ENCODE measurements at regions of chr14 and their contacts with region 1.

Region 1: GRCh38 chr14:90383075-90383730 is 13.6 kb upstream of the CALM1 start:
- DNase-seq: peak; percentile 99
- ATAC-seq: peak; percentile 88
- H3K4me3 Mint-ChIP-seq: no peak overlapping the region
- H3K27ac Mint-ChIP-seq: no peak overlapping the region
- H3K4me1 Mint-ChIP-seq: peaks cover 23% of the 10 kb centered on the region
- H3K27me3 Mint-ChIP-seq: no peaks in the 10 kb centered on the region

Region 2: DNA sequence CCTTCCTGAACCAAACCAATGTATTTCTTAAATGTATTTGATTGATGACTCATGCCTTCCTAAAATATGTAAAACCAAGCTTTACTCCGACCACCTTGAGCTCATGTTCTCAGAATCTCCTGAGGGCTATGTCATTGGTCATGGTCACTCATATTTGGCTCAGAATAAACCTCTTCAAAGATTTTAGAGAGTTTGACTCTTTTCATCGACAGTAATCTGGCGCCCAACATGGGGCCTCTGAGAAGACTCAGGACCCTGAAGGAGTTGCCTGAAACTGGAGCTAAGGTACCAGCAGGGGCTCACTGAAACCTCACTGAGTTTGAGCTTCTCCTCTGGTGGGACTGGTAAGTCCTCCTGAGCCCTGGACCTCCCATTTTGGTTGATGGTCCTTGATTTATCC is 144.1 kb before region 1 on chr14:
- CTCF ChIA-PET with region 1: no interaction called
- POLR2A ChIA-PET with region 1: no interaction called
- DNase-seq: no peak
- ATAC-seq: no peak
- H3K4me3 Mint-ChIP-seq: no peak overlapping the region
- H3K27ac Mint-ChIP-seq: no peak overlapping the region
- H3K4me1 Mint-ChIP-seq: peaks cover 3% of the 10 kb centered on the region
- H3K27me3 Mint-ChIP-seq: peaks cover 7% of the 10 kb centered on the region

Region 3: DNA sequence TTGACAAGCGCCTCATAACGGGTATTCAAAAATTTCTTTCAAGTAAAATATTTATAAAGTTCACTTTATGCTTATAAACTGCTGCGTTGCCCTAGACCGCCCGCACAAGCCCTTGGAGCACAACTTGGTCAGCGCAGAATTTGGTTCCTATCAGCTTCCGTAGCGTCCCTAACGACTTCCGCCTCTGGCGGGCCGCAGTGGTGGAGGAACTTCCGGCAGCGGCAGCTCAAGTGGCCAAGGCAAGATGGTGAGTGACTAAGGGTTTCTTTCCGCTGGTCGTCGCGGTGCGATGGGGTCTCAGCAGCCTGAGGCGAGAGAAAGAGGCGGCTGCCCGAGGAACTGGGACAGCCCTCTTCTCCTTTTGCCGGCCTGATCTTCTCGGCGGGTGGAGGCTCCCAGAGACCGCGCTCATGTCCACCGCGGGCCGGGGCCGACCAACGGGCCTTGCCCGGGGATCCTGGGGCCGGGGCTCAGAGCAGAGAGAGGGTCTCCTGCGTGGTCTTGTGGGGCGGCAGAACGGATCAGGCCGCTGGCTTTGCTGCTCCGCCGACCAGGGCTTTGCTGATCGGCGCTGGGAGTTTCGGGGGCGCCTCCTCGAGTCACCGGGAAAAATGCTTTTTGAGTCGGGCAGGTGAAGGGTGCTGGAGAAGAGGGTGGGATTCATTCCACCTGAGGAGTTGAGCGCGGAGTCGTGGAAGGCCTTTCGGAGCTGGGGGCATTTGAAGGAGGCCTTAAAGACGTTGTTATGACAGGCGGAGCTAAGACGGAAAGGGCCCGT is 126.7 kb before region 1 on chr14 and contains the start of gene PSMC1:
- CTCF ChIA-PET with region 1: no interaction called
- POLR2A ChIA-PET with region 1: interaction called, 20 read pairs
- DNase-seq: peak; percentile 92
- ATAC-seq: peak; percentile 97
- H3K4me3 Mint-ChIP-seq: peak within 1 kb of the TSS; percentile 93
- H3K27ac Mint-ChIP-seq: peak within 1 kb of the TSS; percentile 95
- H3K4me1 Mint-ChIP-seq: peaks cover 26% of the 10 kb centered on the region
- H3K27me3 Mint-ChIP-seq: peaks cover 4% of the 10 kb centered on the region
- total RNA-seq, gene PSMC1: 83.5 to 88.9 TPM

Region 4: GRCh38 chr14:90331497-90332435 is 51.4 kb before region 1 on chr14 and contains the start of gene NRDE2:
- CTCF ChIA-PET with region 1: no interaction called
- POLR2A ChIA-PET with region 1: interaction called, 33 read pairs
- DNase-seq: peak; percentile 97
- ATAC-seq: peak; percentile 95
- H3K4me3 Mint-ChIP-seq: peak within 1 kb of the TSS; percentile 84
- H3K27ac Mint-ChIP-seq: peak within 1 kb of the TSS; percentile 90
- H3K4me1 Mint-ChIP-seq: peaks cover 20% of the 10 kb centered on the region
- H3K27me3 Mint-ChIP-seq: peaks cover 12% of the 10 kb centered on the region
- total RNA-seq, gene NRDE2: 22.1 to 23.5 TPM

Region 5: DNA sequence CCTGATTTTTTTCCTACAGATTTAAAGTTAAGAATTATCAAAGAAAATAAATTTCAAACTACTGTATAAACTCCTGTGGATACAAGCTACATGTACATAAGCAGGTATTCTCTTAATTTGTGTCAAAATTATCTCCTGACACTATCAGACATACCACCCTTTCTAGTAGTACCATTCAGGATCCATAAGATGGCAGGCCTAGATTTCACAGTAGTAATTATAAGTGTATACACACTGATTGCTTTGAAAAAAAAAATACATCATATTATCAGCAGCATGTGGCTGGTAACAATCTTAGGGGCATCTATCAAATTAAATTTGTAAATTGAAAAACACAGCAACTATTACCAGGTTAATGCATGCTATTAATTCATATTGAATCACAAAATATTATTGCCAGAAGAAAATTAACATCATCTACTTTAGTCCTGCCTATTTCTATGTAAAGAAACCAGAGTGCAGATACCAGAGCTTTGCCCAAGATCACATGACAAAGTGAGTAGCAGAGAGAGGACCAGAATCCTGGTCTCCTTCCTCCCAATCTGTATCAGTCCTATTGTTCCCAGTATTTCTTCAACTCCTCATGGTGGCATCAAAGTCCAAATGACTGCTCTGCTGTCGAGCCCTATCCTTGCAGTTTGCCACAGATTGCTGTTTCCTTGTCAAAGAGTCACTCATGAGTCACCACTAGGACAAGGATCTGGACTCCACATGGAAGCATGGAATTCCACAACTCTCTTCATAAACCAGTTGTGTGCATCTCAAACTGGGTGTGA is 14.1 kb before region 1 on chr14:
- CTCF ChIA-PET with region 1: interaction called, 6 read pairs
- POLR2A ChIA-PET with region 1: interaction called, 12 read pairs
- DNase-seq: no peak
- ATAC-seq: peak; percentile 74
- H3K4me3 Mint-ChIP-seq: no peak overlapping the region
- H3K27ac Mint-ChIP-seq: no peak overlapping the region
- H3K4me1 Mint-ChIP-seq: no peaks in the 10 kb centered on the region
- H3K27me3 Mint-ChIP-seq: no peaks in the 10 kb centered on the region

Region 6: DNA sequence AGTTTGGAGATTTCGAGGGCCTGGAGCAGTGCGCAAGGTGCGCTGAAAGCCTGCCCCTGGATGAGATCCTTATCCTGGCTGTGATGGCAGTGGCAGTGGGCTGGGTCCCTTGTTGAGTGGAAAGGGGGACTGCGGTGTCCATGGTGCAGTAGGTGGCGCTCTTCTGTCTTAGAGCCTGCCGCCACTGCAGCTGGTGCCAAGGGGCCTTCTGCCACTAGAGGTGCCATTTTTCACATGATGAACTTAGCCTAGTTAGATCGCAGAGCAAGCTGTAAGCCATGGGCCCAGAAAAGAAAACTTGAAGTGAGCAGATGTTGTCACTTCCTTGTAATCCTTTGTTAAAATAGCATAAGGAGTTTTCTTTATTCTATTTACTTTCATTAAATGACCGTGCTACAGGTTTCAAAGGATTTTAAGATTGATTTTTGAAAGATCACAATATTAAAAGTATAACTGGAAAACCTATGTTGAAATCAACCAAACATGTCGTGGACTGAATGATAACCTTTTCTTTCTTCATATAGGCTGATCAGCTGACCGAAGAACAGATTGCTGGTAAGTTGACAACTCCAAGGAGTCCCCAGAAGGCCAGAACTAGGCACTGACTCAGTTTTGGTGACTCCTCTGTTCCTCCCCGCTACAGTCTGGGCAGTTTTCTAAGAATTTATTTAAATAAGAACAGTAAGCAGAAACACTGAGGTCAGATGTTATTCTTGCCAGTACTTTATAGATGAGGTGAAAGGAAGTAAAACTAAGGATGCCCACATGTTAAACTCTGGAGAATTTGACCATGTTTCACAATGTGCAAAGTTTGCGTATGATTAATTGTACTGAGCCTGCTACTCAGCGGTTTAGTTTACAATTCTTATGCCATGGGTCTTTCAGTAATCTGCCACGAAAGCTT is 16.6 kb after region 1 on chr14:
- CTCF ChIA-PET with region 1: interaction called, 55 read pairs
- POLR2A ChIA-PET with region 1: interaction called, 289 read pairs
- DNase-seq: peak; percentile 93
- ATAC-seq: peak; percentile 52
- H3K4me3 Mint-ChIP-seq: peak overlapping the region; percentile 92
- H3K27ac Mint-ChIP-seq: peak overlapping the region; percentile 97
- H3K4me1 Mint-ChIP-seq: peaks cover 47% of the 10 kb centered on the region
- H3K27me3 Mint-ChIP-seq: no peaks in the 10 kb centered on the region

Region 7: GRCh38 chr14:90599748-90600507 is 216.7 kb after region 1 on chr14:
- CTCF ChIA-PET with region 1: no interaction called
- POLR2A ChIA-PET with region 1: no interaction called
- DNase-seq: no peak
- ATAC-seq: no peak
- H3K4me3 Mint-ChIP-seq: no peak overlapping the region
- H3K27ac Mint-ChIP-seq: no peak overlapping the region
- H3K4me1 Mint-ChIP-seq: no peaks in the 10 kb centered on the region
- H3K27me3 Mint-ChIP-seq: peaks cover 19% of the 10 kb centered on the region